H1 (cell line): ENCODE measurements at regions of chr1 and their contacts with region 1.

Region 1: GRCh38 chr1:6762060-6762459 is 23.2 kb upstream of the CAMTA1 start:
- DNase-seq: no peak
- H3K4me3 ChIP-seq: no peak overlapping the region
- H3K27ac ChIP-seq: no peak overlapping the region
- H3K4me1 ChIP-seq: peaks cover 0 to 2% (median 0%) of the 10 kb centered on the region in 4 experiments; a peak in 1 of 7 replicates
- H3K27me3 ChIP-seq: no peaks in the 10 kb centered on the region; a peak in 1 of 7 replicates
- CTCF ChIP-seq: no peak
- EP300 ChIP-seq: no peak
- POLR2A ChIP-seq: no peak
- RAD21 ChIP-seq: no peak

Region 2: GRCh38 chr1:6587261-6588005 is 174.6 kb before region 1 on chr1:
- CTCF ChIA-PET with region 1: no interaction called
- POLR2A ChIA-PET with region 1: no interaction called
- DNase-seq: no peak
- H3K4me3 ChIP-seq: no peak overlapping the region
- H3K27ac ChIP-seq: no peak overlapping the region
- H3K4me1 ChIP-seq: no peaks in the 10 kb centered on the region
- H3K27me3 ChIP-seq: no peaks in the 10 kb centered on the region
- CTCF ChIP-seq: no peak
- EP300 ChIP-seq: no peak
- POLR2A ChIP-seq: no peak
- RAD21 ChIP-seq: no peak

Region 3: GRCh38 chr1:6784560-6785317 is 22.7 kb after region 1 on chr1:
- CTCF ChIA-PET with region 1: interaction called, 3 read pairs
- POLR2A ChIA-PET with region 1: interaction called, 18 read pairs
- DNase-seq: peak; percentile 98 to 100
- H3K4me3 ChIP-seq: peak overlapping the region; percentile 68 to 94 (median 82)
- H3K27ac ChIP-seq: peak overlapping the region; percentile 95
- H3K4me1 ChIP-seq: peaks cover 3 to 20% (median 10%) of the 10 kb centered on the region in 4 experiments; a peak in 6 of 7 replicates
- H3K27me3 ChIP-seq: no peaks in the 10 kb centered on the region
- CTCF ChIP-seq: no peak
- EP300 ChIP-seq: peak in 1 of 2 experiments; percentile 29; a peak in 1 of 3 replicates
- POLR2A ChIP-seq: peak; percentile 81 to 94
- RAD21 ChIP-seq: no peak

Region 4: GRCh38 chr1:6801966-6802365 is 39.9 kb after region 1 on chr1:
- CTCF ChIA-PET with region 1: no interaction called
- POLR2A ChIA-PET with region 1: no interaction called
- DNase-seq: no peak
- H3K4me3 ChIP-seq: no peak overlapping the region
- H3K27ac ChIP-seq: no peak overlapping the region
- H3K4me1 ChIP-seq: peaks cover 0 to 3% (median 1%) of the 10 kb centered on the region in 4 experiments; a peak in 3 of 7 replicates
- H3K27me3 ChIP-seq: no peaks in the 10 kb centered on the region
- CTCF ChIP-seq: no peak
- EP300 ChIP-seq: no peak
- POLR2A ChIP-seq: no peak
- RAD21 ChIP-seq: no peak